Left ventricle myocardium superior (tissue), 1 donor: ENCODE measurements at regions of chr15 and their contacts with region 1.

Region 1: GRCh38 chr15:46576646-46577395 is 942.0 kb downstream of the SQOR start:
- DNase-seq: no peak
- ATAC-seq: no peak

Region 2: DNA sequence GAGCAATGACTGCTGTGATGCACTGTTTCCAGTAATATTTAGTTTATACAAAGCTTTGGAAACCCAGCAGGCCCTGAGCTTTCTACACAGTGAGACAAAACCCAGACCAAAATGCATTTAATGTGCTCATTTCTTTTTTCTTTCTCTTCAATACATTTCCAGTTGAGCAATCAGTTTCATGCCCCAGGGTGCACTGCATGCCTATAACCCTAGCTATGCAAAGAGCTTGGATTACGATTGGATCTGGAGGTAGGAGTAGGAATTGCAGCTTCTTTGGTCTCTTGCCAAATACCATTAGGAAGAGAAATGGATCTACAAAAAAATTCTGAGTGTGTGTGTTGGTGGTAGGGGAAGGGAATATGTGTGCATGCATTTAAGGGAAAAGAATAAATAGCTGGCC is 59.4 kb after region 1 on chr15:
- intact Hi-C with region 1: loop called (anchors 10 kb)
- DNase-seq: no peak
- ATAC-seq: no peak

Region 3: GRCh38 chr15:46786590-46787285 is 209.9 kb after region 1 on chr15:
- intact Hi-C with region 1: no loop called
- DNase-seq: no peak
- ATAC-seq: peak; percentile 54